MCF 10A (cell line): ENCODE measurements at regions of chr5 and their contacts with region 1.

Region 1: GRCh38 chr5:129410488-129410887 is 49.6 kb upstream of the ADAMTS19 start:
- DNase-seq: no peak
- H3K4me3 Mint-ChIP-seq: no peak overlapping the region
- H3K27ac Mint-ChIP-seq: no peak overlapping the region
- H3K4me1 Mint-ChIP-seq: no peaks in the 10 kb centered on the region
- H3K27me3 Mint-ChIP-seq: peaks cover 73% of the 10 kb centered on the region
- CTCF ChIP-seq: no peak

Region 2: GRCh38 chr5:129322968-129323367 is 87.5 kb before region 1 on chr5:
- CTCF ChIA-PET with region 1: no interaction called
- POLR2A ChIA-PET with region 1: no interaction called
- intact Hi-C with region 1: no loop called
- DNase-seq: peak; percentile 11
- H3K4me3 Mint-ChIP-seq: no peak overlapping the region
- H3K27ac Mint-ChIP-seq: no peak overlapping the region
- H3K4me1 Mint-ChIP-seq: no peaks in the 10 kb centered on the region
- H3K27me3 Mint-ChIP-seq: no peaks in the 10 kb centered on the region
- CTCF ChIP-seq: no peak

Region 3: DNA sequence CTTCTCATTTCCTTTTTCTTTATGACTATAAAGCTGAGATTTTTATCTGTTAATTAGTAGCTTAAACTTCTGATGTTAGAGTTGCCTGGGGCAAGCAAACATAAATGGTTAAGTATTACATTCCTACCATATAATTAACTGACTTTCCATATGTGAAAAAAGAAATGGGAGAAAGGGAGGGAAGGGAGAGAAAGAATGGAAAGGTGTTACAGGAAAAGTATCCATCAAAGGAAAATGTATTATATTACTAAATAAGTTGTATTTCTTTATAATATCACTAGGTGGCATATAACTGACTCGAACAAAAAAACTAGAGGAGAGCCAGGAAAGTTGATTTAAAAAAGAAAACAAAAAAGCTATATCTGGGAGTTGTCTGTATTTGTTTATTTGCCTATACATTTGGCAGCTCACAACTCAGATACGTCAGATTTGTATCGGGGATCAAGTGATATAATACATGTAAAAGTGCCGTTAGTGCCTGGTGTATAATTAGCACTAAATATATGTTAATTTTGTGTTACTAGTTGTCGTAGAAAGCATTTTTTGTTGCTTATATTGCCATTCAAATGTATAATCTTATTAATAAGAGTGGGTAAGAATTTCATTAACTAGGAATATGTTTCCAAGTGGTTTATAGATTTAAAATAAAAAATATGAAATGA is 10.0 kb before region 1 on chr5:
- CTCF ChIA-PET with region 1: interaction called, 14 read pairs
- POLR2A ChIA-PET with region 1: no interaction called
- intact Hi-C with region 1: no loop called
- DNase-seq: peak; percentile 25
- H3K4me3 Mint-ChIP-seq: no peak overlapping the region
- H3K27ac Mint-ChIP-seq: no peak overlapping the region
- H3K4me1 Mint-ChIP-seq: no peaks in the 10 kb centered on the region
- H3K27me3 Mint-ChIP-seq: peaks cover 99% of the 10 kb centered on the region
- CTCF ChIP-seq: peak; percentile 40

Region 4: GRCh38 chr5:129454461-129454860 is 44.0 kb after region 1 on chr5:
- CTCF ChIA-PET with region 1: no interaction called
- POLR2A ChIA-PET with region 1: no interaction called
- intact Hi-C with region 1: no loop called
- DNase-seq: no peak
- H3K4me3 Mint-ChIP-seq: no peak overlapping the region
- H3K27ac Mint-ChIP-seq: no peak overlapping the region
- H3K4me1 Mint-ChIP-seq: no peaks in the 10 kb centered on the region
- H3K27me3 Mint-ChIP-seq: peaks cover 33% of the 10 kb centered on the region
- CTCF ChIP-seq: no peak